ENCODE measurements at regions of chr2 and their contacts with region 1.

Region 1: DNA sequence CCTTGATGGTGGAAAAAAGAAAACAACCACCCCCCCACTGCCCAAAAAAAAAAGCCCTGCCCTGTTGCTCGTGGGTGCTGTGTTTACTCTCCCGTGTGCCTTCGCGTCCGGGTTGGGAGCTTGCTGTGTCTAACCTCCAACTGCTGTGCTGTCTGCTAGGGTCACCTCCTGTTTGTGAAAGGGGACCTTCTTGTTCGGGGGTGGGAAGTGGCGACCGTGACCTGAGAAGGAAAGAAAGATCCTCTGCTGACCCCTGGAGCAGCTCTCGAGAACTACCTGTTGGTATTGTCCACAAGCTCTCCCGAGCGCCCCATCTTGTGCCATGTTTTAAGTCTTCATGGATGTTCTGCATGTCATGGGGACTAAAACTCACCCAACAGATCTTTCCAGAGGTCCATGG is 28.0 kb downstream of the MAL start:
- DNase-seq: no peak
- H3K4me3 Mint-ChIP-seq: peak overlapping the region; percentile 11
- H3K27ac Mint-ChIP-seq: peak overlapping the region; percentile 79
- H3K4me1 Mint-ChIP-seq: peaks cover 75% of the 10 kb centered on the region
- H3K27me3 Mint-ChIP-seq: no peaks in the 10 kb centered on the region

Region 2: DNA sequence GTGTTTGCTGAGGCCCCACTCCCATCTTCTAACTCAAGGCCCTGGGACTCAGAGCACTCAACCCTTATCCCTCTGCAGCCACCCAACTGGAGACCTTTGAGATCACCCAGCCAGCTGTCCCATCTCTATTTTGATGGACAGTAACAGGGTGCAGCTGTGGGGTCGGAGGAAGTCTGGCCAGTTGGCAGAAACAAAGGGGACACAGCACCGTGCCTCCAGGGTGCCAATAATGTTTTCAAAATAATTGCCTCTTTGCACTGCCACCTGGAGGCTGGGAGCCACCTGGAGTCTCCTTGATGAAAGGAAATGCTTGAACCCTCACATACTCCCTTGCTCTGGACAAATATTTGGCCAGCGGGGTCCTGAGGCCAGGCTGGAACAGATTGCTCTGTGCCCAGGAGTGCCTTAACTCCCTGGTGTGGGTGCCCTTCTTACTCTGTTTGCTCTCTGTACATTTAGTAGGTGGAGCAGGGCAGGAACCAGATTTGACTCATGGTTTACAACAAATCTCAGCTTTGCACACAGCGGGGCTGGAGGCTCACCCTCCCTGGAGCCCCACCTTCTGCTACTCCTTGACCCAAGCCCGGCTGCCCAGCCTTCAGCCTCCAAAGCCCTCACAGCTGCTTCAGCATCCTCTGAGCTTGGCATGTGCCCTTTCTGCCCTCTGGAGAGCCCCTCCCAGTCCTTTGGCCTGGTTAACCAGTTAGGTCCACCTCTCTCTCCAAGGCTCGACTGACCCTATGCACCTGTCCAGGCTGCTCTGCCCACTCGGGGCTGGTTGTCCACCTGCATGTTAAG is 10.9 kb before region 1 on chr2:
- intact Hi-C with region 1: loop called (anchors 1 kb)
- DNase-seq: no peak
- H3K4me3 Mint-ChIP-seq: peak overlapping the region; percentile 22
- H3K27ac Mint-ChIP-seq: peak overlapping the region; percentile 78
- H3K4me1 Mint-ChIP-seq: peaks cover 74% of the 10 kb centered on the region
- H3K27me3 Mint-ChIP-seq: no peaks in the 10 kb centered on the region

Region 3: GRCh38 chr2:95159690-95160449 is 106.3 kb after region 1 on chr2 and contains the start of gene ZNF514:
- intact Hi-C with region 1: no loop called
- DNase-seq: peak; percentile 95
- H3K4me3 Mint-ChIP-seq: peak within 1 kb of the TSS; percentile 89
- H3K27ac Mint-ChIP-seq: peak within 1 kb of the TSS; percentile 90
- H3K4me1 Mint-ChIP-seq: peaks cover 20% of the 10 kb centered on the region
- H3K27me3 Mint-ChIP-seq: no peaks in the 10 kb centered on the region
- total RNA-seq, gene ZNF514: 8.2 and 8.3 TPM in 2 replicates

Region 4: GRCh38 chr2:95259765-95260417 is 206.3 kb after region 1 on chr2:
- intact Hi-C with region 1: no loop called
- DNase-seq: no peak
- H3K4me3 Mint-ChIP-seq: no peak overlapping the region
- H3K27ac Mint-ChIP-seq: no peak overlapping the region
- H3K4me1 Mint-ChIP-seq: no peaks in the 10 kb centered on the region
- H3K27me3 Mint-ChIP-seq: no peaks in the 10 kb centered on the region